HCT116 (cell line): ENCODE measurements at regions of chr2 and their contacts with region 1.

Region 1: DNA sequence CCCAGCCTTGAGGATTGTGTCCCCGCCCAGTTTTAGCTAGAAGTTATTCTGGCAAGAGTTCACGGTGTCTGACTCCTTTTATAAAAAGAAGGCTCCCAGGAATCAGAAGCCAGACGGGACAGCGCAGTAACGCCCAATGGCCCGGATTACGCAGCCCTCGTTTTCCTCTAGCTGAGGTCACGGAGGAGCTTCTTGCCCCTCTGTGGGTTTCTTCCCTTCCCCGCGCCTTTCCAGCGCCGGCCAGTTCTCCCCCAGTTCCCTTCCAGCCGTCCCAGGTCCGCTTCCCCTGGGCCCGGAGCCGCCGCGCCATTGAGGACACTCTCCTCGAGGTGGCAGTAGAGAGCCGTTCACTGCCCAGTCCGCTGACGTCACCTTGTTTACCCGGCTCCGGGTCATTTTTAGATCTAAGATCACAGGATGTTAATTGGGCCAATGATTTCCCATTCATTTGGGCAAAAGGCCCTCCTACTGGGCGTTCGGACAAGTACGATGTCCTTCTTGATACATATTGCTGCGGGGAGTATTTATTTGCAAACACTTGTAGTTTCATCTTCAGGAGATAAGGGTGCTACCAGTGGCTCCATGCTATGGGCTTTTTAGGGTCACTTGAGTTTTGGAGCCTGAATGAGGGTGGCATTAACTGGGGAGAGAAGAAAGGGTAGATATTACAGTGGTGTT is 81.5 kb upstream of the PPM1B start:
- DNase-seq: peak; percentile 68
- ATAC-seq: peak; percentile 94
- H3K4me3 ChIP-seq: peak overlapping the region; percentile 27 to 31
- H3K27ac ChIP-seq: no peak overlapping the region
- H3K4me1 ChIP-seq: peaks cover 7 to 21% of the 10 kb centered on the region in 2 experiments; a peak in 3 of 4 replicates
- H3K27me3 ChIP-seq: no peaks in the 10 kb centered on the region
- CTCF ChIP-seq: peak; percentile 89 to 97 (median 95)
- POLR2A ChIP-seq: no peak
- RAD21 ChIP-seq: peak; percentile 93

Region 2: GRCh38 chr2:43853141-43854081 is 233.8 kb before region 1 on chr2:
- CTCF ChIA-PET with region 1: no interaction called
- POLR2A ChIA-PET with region 1: no interaction called
- RAD21 ChIA-PET with region 1: no interaction called
- intact Hi-C with region 1: no loop called
- DNase-seq: no peak
- ATAC-seq: no peak
- H3K4me3 ChIP-seq: no peak overlapping the region
- H3K27ac ChIP-seq: no peak overlapping the region
- H3K4me1 ChIP-seq: peaks cover 0 to under 1% of the 10 kb centered on the region in 2 experiments; a peak in 1 of 4 replicates
- H3K27me3 ChIP-seq: peaks cover 40% of the 10 kb centered on the region
- CTCF ChIP-seq: no peak
- POLR2A ChIP-seq: no peak
- RAD21 ChIP-seq: no peak

Region 3: GRCh38 chr2:44184106-44184505 is 96.9 kb after region 1 on chr2:
- CTCF ChIA-PET with region 1: no interaction called
- POLR2A ChIA-PET with region 1: no interaction called
- RAD21 ChIA-PET with region 1: no interaction called
- intact Hi-C with region 1: no loop called
- DNase-seq: no peak
- ATAC-seq: no peak
- H3K4me3 ChIP-seq: no peak overlapping the region
- H3K27ac ChIP-seq: no peak overlapping the region
- H3K4me1 ChIP-seq: no peaks in the 10 kb centered on the region
- H3K27me3 ChIP-seq: no peaks in the 10 kb centered on the region
- CTCF ChIP-seq: no peak
- POLR2A ChIP-seq: no peak
- RAD21 ChIP-seq: no peak

Region 4: GRCh38 chr2:44291281-44292248 is 204.4 kb after region 1 on chr2:
- CTCF ChIA-PET with region 1: interaction called, 4 read pairs
- POLR2A ChIA-PET with region 1: no interaction called
- RAD21 ChIA-PET with region 1: interaction called in 1 of 2 experiments, 3 read pairs
- intact Hi-C with region 1: loop called (anchors 1 kb)
- DNase-seq: peak; percentile 48
- ATAC-seq: peak; percentile 96
- H3K4me3 ChIP-seq: no peak overlapping the region
- H3K27ac ChIP-seq: no peak overlapping the region
- H3K4me1 ChIP-seq: peaks cover 10 to 17% of the 10 kb centered on the region in 2 experiments
- H3K27me3 ChIP-seq: no peaks in the 10 kb centered on the region
- CTCF ChIP-seq: peak; percentile 65 to 88 (median 69)
- POLR2A ChIP-seq: no peak
- RAD21 ChIP-seq: peak; percentile 90

Region 5: GRCh38 chr2:44342854-44343253 is 255.7 kb after region 1 on chr2:
- CTCF ChIA-PET with region 1: no interaction called
- POLR2A ChIA-PET with region 1: no interaction called
- RAD21 ChIA-PET with region 1: no interaction called
- intact Hi-C with region 1: loop called (anchors 5 kb)
- DNase-seq: no peak
- ATAC-seq: peak; percentile 77
- H3K4me3 ChIP-seq: no peak overlapping the region
- H3K27ac ChIP-seq: no peak overlapping the region
- H3K4me1 ChIP-seq: no peaks in the 10 kb centered on the region
- H3K27me3 ChIP-seq: no peaks in the 10 kb centered on the region
- CTCF ChIP-seq: peak; percentile 24 to 62 (median 33); a peak in 3 of 6 replicates
- POLR2A ChIP-seq: no peak
- RAD21 ChIP-seq: peak; percentile 51

Region 6: GRCh38 chr2:44802777-44803424 is 715.7 kb after region 1 on chr2:
- CTCF ChIA-PET with region 1: no interaction called
- POLR2A ChIA-PET with region 1: no interaction called
- RAD21 ChIA-PET with region 1: no interaction called
- intact Hi-C with region 1: no loop called
- DNase-seq: no peak
- ATAC-seq: no peak
- H3K4me3 ChIP-seq: no peak overlapping the region
- H3K27ac ChIP-seq: no peak overlapping the region
- H3K4me1 ChIP-seq: no peaks in the 10 kb centered on the region
- H3K27me3 ChIP-seq: peaks cover 36% of the 10 kb centered on the region
- CTCF ChIP-seq: no peak
- POLR2A ChIP-seq: no peak
- RAD21 ChIP-seq: no peak